ENCODE measurements at regions of chr10 and their contacts with region 1.

Region 1: GRCh38 chr10:110885932-110886674 is 14.4 kb downstream of the PDCD4 start:
- DNase-seq: no peak
- ATAC-seq: no peak
- H3K4me3 ChIP-seq: no peak overlapping the region
- H3K27ac ChIP-seq: peak overlapping the region in 1 of 12 donors; percentile 29
- H3K4me1 ChIP-seq: peaks cover 0 to 20% (median 0%) of the 10 kb centered on the region in 12 donors
- H3K27me3 ChIP-seq: no peaks in the 10 kb centered on the region
- CTCF ChIP-seq: no peak
- POLR2A ChIP-seq: no peak

Region 2: GRCh38 chr10:110285501-110285900 is 600.6 kb before region 1 on chr10:
- intact Hi-C with region 1: no loop called
- DNase-seq: no peak
- ATAC-seq: peak in 1 of 4 donors; percentile 19
- H3K4me3 ChIP-seq: no peak overlapping the region
- H3K27ac ChIP-seq: no peak overlapping the region
- H3K4me1 ChIP-seq: peaks cover 0 to 11% (median 0%) of the 10 kb centered on the region in 12 donors
- H3K27me3 ChIP-seq: no peaks in the 10 kb centered on the region
- CTCF ChIP-seq: no peak
- POLR2A ChIP-seq: no peak

Region 3: DNA sequence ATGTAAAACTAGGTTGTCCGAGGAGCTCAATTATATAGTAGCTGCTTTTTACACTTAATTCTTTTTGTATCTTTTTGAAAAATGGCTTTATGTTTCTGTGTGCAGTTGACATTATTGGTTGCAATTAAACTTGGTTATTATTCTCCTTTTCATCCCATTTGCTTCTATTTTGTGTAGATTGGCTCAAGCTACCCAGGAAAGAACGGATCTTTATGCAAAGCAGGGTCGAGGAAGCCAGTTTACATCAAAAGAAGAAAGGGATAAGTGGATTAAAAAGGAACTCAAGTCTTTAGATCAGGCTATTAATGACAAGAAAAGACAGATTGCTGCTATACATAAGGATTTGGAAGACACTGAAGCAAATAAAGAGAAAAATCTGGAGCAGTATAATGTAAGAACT is 302.1 kb before region 1 on chr10:
- intact Hi-C with region 1: loop called in 1 of 10 experiments (anchors 5 kb)
- DNase-seq: no peak
- ATAC-seq: no peak
- H3K4me3 ChIP-seq: no peak overlapping the region
- H3K27ac ChIP-seq: no peak overlapping the region
- H3K4me1 ChIP-seq: no peaks in the 10 kb centered on the region
- H3K27me3 ChIP-seq: no peaks in the 10 kb centered on the region
- CTCF ChIP-seq: no peak
- POLR2A ChIP-seq: no peak

Region 4: GRCh38 chr10:110803830-110804338 is 82.2 kb before region 1 on chr10:
- intact Hi-C with region 1: loop called in 8 of 10 experiments (anchors 5 kb)
- DNase-seq: peak in 2 of 5 donors; percentile 53 to 55
- ATAC-seq: peak; percentile 44 to 66 (median 58)
- H3K4me3 ChIP-seq: no peak overlapping the region
- H3K27ac ChIP-seq: peak overlapping the region in 8 of 12 donors; percentile 14 to 68 (median 31)
- H3K4me1 ChIP-seq: peaks cover 0 to 42% (median 26%) of the 10 kb centered on the region in 12 donors
- H3K27me3 ChIP-seq: no peaks in the 10 kb centered on the region
- CTCF ChIP-seq: peak; percentile 36 to 74 (median 55)
- POLR2A ChIP-seq: no peak

Measured in heart left ventricle (tissue), 16 donors.